Ovary (tissue), 10 donors: ENCODE measurements at regions of chr4 and their contacts with region 1.

Region 1: GRCh38 chr4:17823871-17824669 is 13.3 kb downstream of the NCAPG start:
- DNase-seq: no peak
- H3K4me3 ChIP-seq: no peak overlapping the region
- H3K27ac ChIP-seq: no peak overlapping the region
- H3K4me1 ChIP-seq: no peaks in the 10 kb centered on the region
- H3K27me3 ChIP-seq: no peaks in the 10 kb centered on the region
- CTCF ChIP-seq: no peak
- EP300 ChIP-seq: no peak
- POLR2A ChIP-seq: no peak

Region 2: DNA sequence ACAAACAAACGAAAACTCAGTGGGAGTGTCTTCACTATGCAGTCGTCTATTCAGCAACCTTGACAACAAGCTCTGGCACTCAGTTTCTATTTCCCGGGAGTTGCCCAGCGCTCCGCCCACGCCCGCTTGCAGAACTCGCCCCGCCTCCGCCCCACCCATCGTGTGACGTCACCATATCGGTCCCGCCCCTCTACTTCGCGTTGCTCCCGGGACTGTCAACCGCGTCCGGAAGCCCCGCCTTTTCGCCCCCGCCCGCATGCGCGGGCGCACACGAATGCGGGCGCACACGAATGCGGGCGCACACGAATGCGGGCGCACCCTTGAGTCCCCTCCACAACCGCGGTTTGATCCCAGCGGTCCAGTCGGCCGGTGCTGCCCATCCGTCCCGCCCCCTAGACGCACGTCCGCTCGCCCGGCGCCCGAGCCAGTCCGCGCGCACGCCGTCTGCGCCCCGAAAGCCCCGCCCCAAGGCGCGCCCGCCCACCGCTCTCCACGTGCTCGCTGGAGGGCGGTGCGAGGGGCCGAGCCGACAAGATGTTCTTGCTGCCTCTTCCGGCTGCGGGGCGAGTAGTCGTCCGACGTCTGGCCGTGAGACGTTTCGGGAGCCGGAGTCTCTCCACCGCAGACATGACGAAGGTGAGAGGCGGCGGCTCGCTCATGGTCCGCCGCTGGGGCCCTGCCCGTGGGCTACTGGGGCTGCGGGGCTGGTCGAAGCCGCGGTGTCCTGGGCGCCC is 247.0 kb before region 1 on chr4 and contains the start of gene LAP3:
- intact Hi-C with region 1: no loop called
- DNase-seq: peak; percentile 96 to 100 (median 99)
- H3K4me3 ChIP-seq: peak within 1 kb of the TSS; percentile 64
- H3K27ac ChIP-seq: peak within 1 kb of the TSS in 1 of 2 donors; percentile 77
- H3K4me1 ChIP-seq: peaks cover 5% of the 10 kb centered on the region
- H3K27me3 ChIP-seq: no peaks in the 10 kb centered on the region
- CTCF ChIP-seq: no peak
- EP300 ChIP-seq: no peak
- POLR2A ChIP-seq: peak; percentile 63
- total RNA-seq, gene LAP3: 23.5 to 54.7 (median 33.9) TPM

Region 3: GRCh38 chr4:18138076-18138665 is 314.1 kb after region 1 on chr4:
- intact Hi-C with region 1: no loop called
- DNase-seq: no peak
- H3K4me3 ChIP-seq: no peak overlapping the region
- H3K27ac ChIP-seq: no peak overlapping the region
- H3K4me1 ChIP-seq: no peaks in the 10 kb centered on the region
- H3K27me3 ChIP-seq: no peaks in the 10 kb centered on the region
- CTCF ChIP-seq: no peak
- EP300 ChIP-seq: no peak
- POLR2A ChIP-seq: no peak

Region 4: GRCh38 chr4:18582841-18583240 is 758.8 kb after region 1 on chr4:
- intact Hi-C with region 1: loop called in 2 of 4 experiments (anchors 10 kb)
- DNase-seq: no peak
- H3K4me3 ChIP-seq: no peak overlapping the region
- H3K27ac ChIP-seq: no peak overlapping the region
- H3K4me1 ChIP-seq: no peaks in the 10 kb centered on the region
- H3K27me3 ChIP-seq: no peaks in the 10 kb centered on the region
- CTCF ChIP-seq: no peak
- EP300 ChIP-seq: no peak
- POLR2A ChIP-seq: no peak